ENCODE measurements at regions of chr7 and their contacts with region 1.

Region 1: DNA sequence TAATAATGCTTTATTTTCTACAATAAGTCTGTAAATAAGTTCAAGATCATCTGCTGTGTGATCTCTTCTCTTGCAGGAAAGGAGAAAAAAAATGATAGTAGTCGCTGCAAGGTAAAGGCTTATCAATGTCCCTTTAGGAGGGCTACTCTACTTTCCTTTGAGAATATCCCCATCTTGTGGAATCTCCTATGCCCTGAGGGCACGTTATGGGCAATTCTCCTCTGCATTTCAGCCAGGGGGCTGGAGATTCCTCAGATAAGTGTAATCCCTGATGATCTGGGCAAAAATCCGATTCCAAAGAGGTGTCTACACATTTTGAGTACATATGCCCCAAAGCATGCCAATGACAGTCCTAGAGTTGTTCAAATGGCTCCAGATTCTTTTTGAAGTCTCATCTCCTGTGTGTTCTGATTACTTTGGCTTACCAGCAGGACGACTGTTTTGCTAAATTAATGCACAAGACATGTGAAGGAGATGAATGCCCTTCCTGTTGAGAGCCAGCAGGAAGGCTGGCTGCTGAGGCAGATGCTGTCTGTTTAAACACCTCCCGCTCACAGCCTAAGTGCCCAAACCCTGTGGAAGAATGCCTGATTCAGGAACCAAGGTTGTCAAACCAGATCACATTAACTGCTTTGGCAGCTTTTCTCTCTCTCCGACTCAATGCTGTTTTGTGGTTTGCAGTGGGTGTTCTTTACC is 171.2 kb upstream of the COL1A2 start:
- DNase-seq: peak; percentile 97
- H3K4me3 ChIP-seq: peak overlapping the region; percentile 12
- H3K27ac ChIP-seq: peak overlapping the region; percentile 52
- H3K4me1 ChIP-seq: peaks cover 46% of the 10 kb centered on the region
- H3K27me3 ChIP-seq: no peaks in the 10 kb centered on the region
- CTCF ChIP-seq: peak; percentile 76

Region 2: GRCh38 chr7:93622036-93623033 is 601.2 kb before region 1 on chr7:
- CTCF ChIA-PET with region 1: no interaction called
- POLR2A ChIA-PET with region 1: no interaction called
- intact Hi-C with region 1: loop called (anchors 2 kb)
- DNase-seq: peak; percentile 71
- H3K4me3 ChIP-seq: peak overlapping the region; percentile 30
- H3K27ac ChIP-seq: no peak overlapping the region
- H3K4me1 ChIP-seq: no peaks in the 10 kb centered on the region
- H3K27me3 ChIP-seq: no peaks in the 10 kb centered on the region
- CTCF ChIP-seq: peak; percentile 65

Region 3: GRCh38 chr7:93799750-93800357 is 423.7 kb before region 1 on chr7:
- CTCF ChIA-PET with region 1: interaction called, 3 read pairs
- POLR2A ChIA-PET with region 1: no interaction called
- intact Hi-C with region 1: loop called (anchors 5 kb)
- DNase-seq: peak; percentile 28
- H3K4me3 ChIP-seq: no peak overlapping the region
- H3K27ac ChIP-seq: no peak overlapping the region
- H3K4me1 ChIP-seq: no peaks in the 10 kb centered on the region
- H3K27me3 ChIP-seq: no peaks in the 10 kb centered on the region
- CTCF ChIP-seq: peak; percentile 67

Region 4: DNA sequence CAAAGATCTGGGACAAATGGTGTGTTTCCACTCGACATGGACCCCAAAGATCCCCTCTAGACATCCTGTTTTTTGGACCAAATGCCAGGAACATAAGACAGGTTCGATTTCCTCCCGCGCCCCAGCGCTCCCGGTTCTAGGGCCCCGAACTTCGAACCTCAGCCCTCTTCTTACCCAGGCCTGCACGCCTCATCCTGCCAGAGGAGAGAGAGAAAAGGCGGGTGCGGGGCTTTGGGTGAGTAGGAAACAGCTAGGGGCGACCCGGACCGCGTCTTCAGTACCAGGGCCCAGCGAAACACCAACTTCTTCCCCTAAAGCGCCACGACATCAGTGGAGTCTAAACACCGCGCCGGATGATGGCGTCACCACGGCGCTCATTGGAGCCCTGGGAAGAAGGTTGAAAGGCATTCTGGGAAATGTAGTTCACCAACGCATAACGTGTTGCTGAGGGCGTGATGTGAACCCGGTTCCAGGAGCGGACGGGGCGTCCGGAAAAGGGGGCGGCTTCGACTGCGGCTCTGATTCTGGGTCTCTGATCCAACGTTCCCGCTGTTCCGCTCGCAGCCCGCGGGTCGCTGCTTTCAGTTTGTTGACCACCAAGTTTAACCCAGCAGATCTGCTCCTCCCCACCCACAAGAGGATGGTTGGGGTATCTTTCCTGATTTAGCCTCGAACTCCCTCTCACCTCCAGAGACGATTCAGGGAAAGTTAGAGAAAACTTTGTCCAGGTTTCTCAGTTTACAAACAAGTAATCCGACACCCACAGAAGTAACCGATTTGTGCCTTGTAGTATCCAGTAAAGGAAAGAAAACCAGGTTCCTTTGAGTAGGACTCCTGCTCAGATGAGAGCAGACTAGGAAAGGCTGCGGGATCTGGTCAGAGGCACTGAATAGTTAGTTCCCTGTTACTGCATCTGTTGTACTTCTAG is 219.2 kb before region 1 on chr7 and contains the start of gene BET1:
- CTCF ChIA-PET with region 1: no interaction called
- POLR2A ChIA-PET with region 1: no interaction called
- intact Hi-C with region 1: loop called (anchors 10 kb)
- DNase-seq: peak; percentile 98
- H3K4me3 ChIP-seq: peak within 1 kb of the TSS; percentile 95
- H3K27ac ChIP-seq: peak within 1 kb of the TSS; percentile 81
- H3K4me1 ChIP-seq: peaks cover 10% of the 10 kb centered on the region
- H3K27me3 ChIP-seq: no peaks in the 10 kb centered on the region
- CTCF ChIP-seq: no peak
- total RNA-seq, gene BET1: 19.2 and 19.8 TPM in 2 replicates

Region 5: GRCh38 chr7:94154858-94155257 is 68.7 kb before region 1 on chr7:
- CTCF ChIA-PET with region 1: no interaction called
- POLR2A ChIA-PET with region 1: no interaction called
- intact Hi-C with region 1: no loop called
- DNase-seq: no peak
- H3K4me3 ChIP-seq: no peak overlapping the region
- H3K27ac ChIP-seq: no peak overlapping the region
- H3K4me1 ChIP-seq: no peaks in the 10 kb centered on the region
- H3K27me3 ChIP-seq: no peaks in the 10 kb centered on the region
- CTCF ChIP-seq: no peak

Region 6: GRCh38 chr7:94266238-94266644 is 42.7 kb after region 1 on chr7:
- CTCF ChIA-PET with region 1: no interaction called
- POLR2A ChIA-PET with region 1: no interaction called
- intact Hi-C with region 1: loop called (anchors 2 kb)
- DNase-seq: peak; percentile 89
- H3K4me3 ChIP-seq: peak overlapping the region; percentile 7
- H3K27ac ChIP-seq: peak overlapping the region; percentile 56
- H3K4me1 ChIP-seq: peaks cover 55% of the 10 kb centered on the region
- H3K27me3 ChIP-seq: no peaks in the 10 kb centered on the region
- CTCF ChIP-seq: no peak

Region 7: DNA sequence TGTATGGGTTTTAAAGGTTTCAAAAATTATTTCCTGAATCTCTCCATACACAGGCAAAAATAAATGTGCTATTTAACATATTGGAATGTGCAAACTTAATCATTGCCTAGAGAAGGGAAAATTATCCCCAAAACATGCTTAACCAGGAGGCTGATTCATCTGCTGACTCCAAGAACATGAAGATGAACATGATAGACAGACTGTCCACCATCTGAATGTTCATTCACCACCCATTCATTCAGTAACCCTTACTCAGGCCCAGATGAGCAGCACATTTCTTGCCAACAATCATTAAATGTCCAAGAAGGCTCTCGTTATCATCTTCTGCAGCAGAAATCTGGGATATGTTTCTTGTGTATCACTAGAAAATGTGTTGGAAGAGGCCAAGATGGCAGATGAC is 794.5 kb after region 1 on chr7:
- CTCF ChIA-PET with region 1: no interaction called
- POLR2A ChIA-PET with region 1: no interaction called
- intact Hi-C with region 1: no loop called
- DNase-seq: no peak
- H3K4me3 ChIP-seq: no peak overlapping the region
- H3K27ac ChIP-seq: no peak overlapping the region
- H3K4me1 ChIP-seq: no peaks in the 10 kb centered on the region
- H3K27me3 ChIP-seq: no peaks in the 10 kb centered on the region
- CTCF ChIP-seq: no peak